ENCODE measurements at regions of chr6 and their contacts with region 1.

Region 1: DNA sequence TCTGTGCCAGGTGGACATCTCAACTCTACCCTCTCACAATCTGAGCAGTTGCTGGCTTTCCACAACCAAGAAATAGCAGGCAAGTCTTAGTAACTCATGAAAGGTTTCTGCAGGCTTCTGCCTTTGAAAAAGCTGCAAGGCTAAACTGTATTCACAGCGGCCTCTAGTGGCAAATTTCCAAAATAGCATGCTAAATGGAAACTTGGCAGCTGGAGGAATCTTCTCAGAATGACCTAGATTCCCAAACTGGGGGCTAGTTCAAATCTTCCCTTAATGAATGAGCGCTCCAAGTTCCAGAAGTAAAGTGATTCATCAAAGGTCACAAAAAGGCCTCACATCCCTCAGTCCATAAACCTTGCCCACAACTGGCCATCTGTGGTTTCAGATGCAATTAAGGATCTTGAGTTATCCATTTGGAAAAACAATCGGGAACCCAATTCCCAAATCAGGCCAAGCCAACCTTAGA is 11.9 kb upstream of the CPNE5 start:
- DNase-seq: peak; percentile 69
- ATAC-seq: no peak; the same call in 2 of the 3 replicates
- H3K4me3 ChIP-seq: no peak overlapping the region
- H3K27ac ChIP-seq: no peak overlapping the region
- H3K4me1 ChIP-seq: peaks cover 35% of the 10 kb centered on the region
- H3K27me3 ChIP-seq: no peaks in the 10 kb centered on the region
- CTCF ChIP-seq: peak; percentile 88
- EP300 ChIP-seq: no peak
- POLR2A ChIP-seq: no peak
- RAD21 ChIP-seq: peak; percentile 87

Region 2: GRCh38 chr6:36765594-36766398 is 85.4 kb before region 1 on chr6:
- CTCF ChIA-PET with region 1: interaction called, 47 read pairs
- POLR2A ChIA-PET with region 1: no interaction called
- in situ Hi-C with region 1: loop called (anchors 5 kb)
- intact Hi-C with region 1: loop called (anchors 1 kb)
- DNase-seq: peak; percentile 76
- ATAC-seq: peak; percentile 93
- H3K4me3 ChIP-seq: no peak overlapping the region
- H3K27ac ChIP-seq: no peak overlapping the region
- H3K4me1 ChIP-seq: no peaks in the 10 kb centered on the region
- H3K27me3 ChIP-seq: peaks cover 8 to 60% of the 10 kb centered on the region in 2 experiments
- CTCF ChIP-seq: peak; percentile 98
- EP300 ChIP-seq: no peak
- POLR2A ChIP-seq: no peak
- RAD21 ChIP-seq: peak; percentile 96

Region 3: DNA sequence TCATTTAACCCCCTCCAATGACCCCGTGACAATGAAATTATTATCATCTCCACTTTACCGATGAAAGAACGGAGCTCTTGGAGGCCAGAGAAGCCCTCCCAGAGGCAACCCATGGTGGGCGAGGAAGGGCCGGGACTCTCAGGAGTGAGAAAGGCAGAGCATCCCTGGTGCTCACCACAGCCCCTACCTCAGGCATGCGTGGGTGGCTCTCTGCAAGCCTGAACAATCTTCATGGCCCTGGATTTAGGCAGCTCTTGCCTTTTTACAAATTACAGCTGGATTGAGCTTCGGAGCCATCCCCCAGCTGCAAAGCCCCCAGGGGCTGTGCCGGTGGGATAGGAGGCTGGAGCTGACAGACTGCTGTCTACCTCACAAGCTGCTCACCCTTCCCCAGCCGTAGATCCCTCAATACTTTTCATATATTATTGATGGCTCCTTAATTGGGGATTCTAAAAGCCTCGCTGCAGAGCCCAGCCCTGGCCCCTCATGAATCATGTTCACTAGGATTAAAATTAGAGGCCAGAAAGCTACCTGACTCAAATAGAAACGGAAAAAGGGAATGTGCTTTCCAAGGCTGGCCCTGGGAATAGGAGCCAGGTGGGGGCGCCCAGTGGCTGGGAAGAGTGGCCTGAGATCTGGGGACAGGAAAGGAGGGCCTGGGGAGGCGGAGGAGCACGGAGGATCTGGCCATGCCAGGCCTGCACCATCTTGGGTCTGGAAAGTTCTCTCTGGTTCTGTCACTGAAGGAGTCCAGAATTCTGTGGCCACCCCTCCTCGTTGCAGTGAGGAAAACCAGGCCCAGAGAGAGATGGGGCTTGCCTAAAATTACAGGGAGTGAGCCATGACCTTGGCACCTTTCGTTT is 41.0 kb before region 1 on chr6:
- CTCF ChIA-PET with region 1: interaction called, 40 read pairs
- POLR2A ChIA-PET with region 1: interaction called, 3 read pairs
- in situ Hi-C with region 1: loop called (anchors 5 kb)
- intact Hi-C with region 1: loop called (anchors 1 kb)
- DNase-seq: peak; percentile 34
- ATAC-seq: peak; percentile 75
- H3K4me3 ChIP-seq: peak overlapping the region in 2 of 3 experiments; percentile 11 to 54; a peak in 3 of 6 replicates
- H3K27ac ChIP-seq: no peak overlapping the region
- H3K4me1 ChIP-seq: peaks cover 48% of the 10 kb centered on the region
- H3K27me3 ChIP-seq: peaks cover 4 to 41% of the 10 kb centered on the region in 2 experiments; a peak in 4 of 5 replicates
- CTCF ChIP-seq: peak; percentile 94
- EP300 ChIP-seq: no peak
- POLR2A ChIP-seq: no peak
- RAD21 ChIP-seq: peak; percentile 76

Region 4: GRCh38 chr6:36820700-36821580 is 30.2 kb before region 1 on chr6:
- CTCF ChIA-PET with region 1: no interaction called
- POLR2A ChIA-PET with region 1: interaction called, 11 read pairs
- in situ Hi-C with region 1: no loop called
- intact Hi-C with region 1: no loop called
- DNase-seq: no peak
- ATAC-seq: 0 out of 3 replicates have a peak, but pooled peaks have one; percentile 3
- H3K4me3 ChIP-seq: no peak overlapping the region
- H3K27ac ChIP-seq: no peak overlapping the region
- H3K4me1 ChIP-seq: peaks cover 96% of the 10 kb centered on the region
- H3K27me3 ChIP-seq: peaks cover 13 to 54% of the 10 kb centered on the region in 2 experiments; a peak in 4 of 5 replicates
- CTCF ChIP-seq: no peak
- EP300 ChIP-seq: no peak
- POLR2A ChIP-seq: no peak
- RAD21 ChIP-seq: no peak

Region 5: DNA sequence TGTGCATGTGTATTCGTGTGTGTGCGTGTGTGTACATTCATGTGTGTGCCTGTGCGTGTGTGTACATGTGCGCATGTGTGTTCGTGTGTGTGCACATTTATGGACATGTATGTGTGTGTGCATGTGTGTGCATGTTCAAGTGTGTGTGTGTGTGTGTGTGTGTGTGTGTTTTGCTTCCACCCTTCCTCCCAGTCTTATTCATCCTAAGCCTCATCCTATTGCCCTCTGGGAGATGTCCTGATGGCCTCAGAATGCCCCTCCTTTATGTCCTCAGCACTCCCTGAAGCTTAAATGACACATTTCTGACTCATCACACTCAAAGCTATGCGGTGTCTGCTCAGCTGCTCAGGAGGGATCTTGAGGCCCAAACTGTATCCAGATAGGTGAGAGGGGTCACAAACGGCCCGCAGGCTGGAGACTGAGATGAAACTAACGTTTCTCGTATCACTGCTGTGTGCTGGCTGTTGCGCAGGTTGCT is 725.2 kb after region 1 on chr6:
- CTCF ChIA-PET with region 1: no interaction called
- POLR2A ChIA-PET with region 1: no interaction called
- in situ Hi-C with region 1: no loop called
- intact Hi-C with region 1: no loop called
- DNase-seq: no peak
- ATAC-seq: no peak
- H3K4me3 ChIP-seq: no peak overlapping the region
- H3K27ac ChIP-seq: no peak overlapping the region
- H3K4me1 ChIP-seq: no peaks in the 10 kb centered on the region
- H3K27me3 ChIP-seq: peaks cover 2 to 50% of the 10 kb centered on the region in 2 experiments; a peak in 4 of 5 replicates
- CTCF ChIP-seq: no peak
- EP300 ChIP-seq: no peak
- POLR2A ChIP-seq: no peak
- RAD21 ChIP-seq: no peak